Vagina (tissue), 2 donors: ENCODE measurements at regions of chr11 and their contacts with region 1.

Region 1: DNA sequence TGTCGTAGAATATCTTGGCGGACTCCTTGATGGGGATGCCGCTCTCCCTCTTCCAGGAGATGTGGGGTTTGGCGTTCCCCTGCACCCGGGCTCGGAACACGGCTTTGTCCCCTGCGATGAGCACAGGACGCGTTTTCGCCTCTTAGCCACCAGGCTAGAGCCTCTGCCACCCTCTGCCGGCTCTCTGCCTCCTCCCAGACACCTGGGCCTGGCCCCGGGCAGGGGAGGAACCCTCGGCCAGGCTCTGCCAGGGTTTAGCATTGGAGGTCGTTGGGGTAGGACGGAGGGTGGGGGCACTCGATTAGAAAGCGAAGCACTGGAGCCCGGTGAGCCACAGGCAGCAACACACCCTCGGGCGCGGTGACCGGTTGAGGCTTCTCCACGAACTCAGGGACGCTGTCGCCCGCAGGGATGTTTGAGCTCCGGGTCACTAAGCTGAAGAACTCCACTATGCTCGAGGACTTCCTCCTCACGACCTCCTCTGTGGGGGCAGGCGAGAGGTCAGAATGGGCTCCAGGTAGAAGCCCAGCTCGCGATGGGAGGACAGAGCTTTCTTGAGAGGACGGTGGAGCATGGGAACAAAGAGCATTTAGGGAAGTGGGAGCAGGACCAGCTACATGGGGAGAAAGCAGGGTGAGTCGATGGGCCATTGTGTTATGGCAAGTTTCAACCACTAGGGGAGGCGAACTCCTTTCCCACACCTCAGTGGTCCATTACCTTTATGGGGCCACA is 4.3 kb downstream of the IGSF22 start:
- DNase-seq: no peak
- H3K4me3 ChIP-seq: peak overlapping the region; percentile 59 to 81
- H3K27ac ChIP-seq: peak overlapping the region; percentile 79
- H3K4me1 ChIP-seq: peaks cover 19% of the 10 kb centered on the region
- H3K27me3 ChIP-seq: no peaks in the 10 kb centered on the region
- CTCF ChIP-seq: peak in 2 of 3 experiments; percentile 46 to 64
- POLR2A ChIP-seq: no peak

Region 2: GRCh38 chr11:18588297-18589252 is 133.2 kb before region 1 on chr11 and contains the start of gene UEVLD:
- intact Hi-C with region 1: loop called (anchors 5 kb)
- DNase-seq: peak in 1 of 2 donors; percentile 93
- H3K4me3 ChIP-seq: peak within 1 kb of the TSS; percentile 80 to 90
- H3K27ac ChIP-seq: peak within 1 kb of the TSS; percentile 70
- H3K4me1 ChIP-seq: peaks cover 35% of the 10 kb centered on the region
- H3K27me3 ChIP-seq: no peaks in the 10 kb centered on the region
- CTCF ChIP-seq: no peak
- POLR2A ChIP-seq: peak in 1 of 2 donors; percentile 31
- total RNA-seq, gene UEVLD: 21.4 TPM

Region 3: DNA sequence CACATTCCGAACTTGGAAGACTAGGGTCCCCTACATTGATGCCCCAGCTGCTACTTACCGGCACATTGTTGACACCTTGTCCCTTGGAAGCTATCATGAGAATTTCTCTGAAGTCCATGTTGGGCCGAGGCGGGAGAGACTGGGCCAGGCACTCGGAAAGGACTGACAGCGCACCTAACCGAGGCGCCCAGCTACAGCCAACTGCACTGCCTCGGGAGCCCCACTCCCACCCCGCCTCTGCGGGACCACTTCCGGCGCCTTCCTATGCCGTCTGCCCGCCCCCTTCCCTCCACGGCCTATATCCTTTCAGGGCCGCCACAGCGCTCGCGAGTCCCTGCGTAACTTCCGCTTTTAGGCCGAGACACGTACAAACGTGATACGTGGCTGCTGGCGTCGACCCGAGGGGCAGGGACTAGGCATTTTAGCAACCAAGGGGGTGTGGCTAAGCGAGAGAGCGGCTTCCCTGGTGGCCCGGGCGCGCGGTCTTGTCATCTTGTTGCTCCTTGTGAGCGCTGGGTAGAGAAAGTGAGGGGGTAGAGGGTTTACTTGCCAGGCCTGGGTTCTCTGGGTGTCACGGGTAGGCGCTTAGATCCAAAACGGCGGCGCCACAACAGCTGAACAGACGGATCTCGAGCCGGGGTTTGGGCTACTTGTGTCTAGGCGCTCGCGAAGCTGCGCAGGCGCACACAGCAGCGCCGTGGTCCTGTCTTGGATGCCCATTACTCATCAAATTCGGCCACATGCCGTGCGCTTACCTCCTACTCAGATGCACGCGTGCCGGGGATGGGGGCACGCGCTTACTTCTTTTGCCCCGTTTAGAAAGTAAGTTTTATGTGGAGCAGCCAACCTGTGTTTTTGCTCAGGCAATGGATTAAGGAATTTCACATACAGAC is 87.3 kb before region 1 on chr11 and contains the start of gene SPTY2D1:
- intact Hi-C with region 1: loop called (anchors 10 kb)
- DNase-seq: peak; percentile 98 to 99
- H3K4me3 ChIP-seq: peak within 1 kb of the TSS; percentile 61 to 69
- H3K27ac ChIP-seq: peak within 1 kb of the TSS; percentile 82
- H3K4me1 ChIP-seq: peaks cover 19% of the 10 kb centered on the region
- H3K27me3 ChIP-seq: no peaks in the 10 kb centered on the region
- CTCF ChIP-seq: peak in 1 of 3 experiments; percentile 6
- POLR2A ChIP-seq: peak in 1 of 2 donors; percentile 66
- total RNA-seq, gene SPTY2D1: 23.8 TPM

Region 4: GRCh38 chr11:18785411-18785810 is 63.7 kb after region 1 on chr11:
- intact Hi-C with region 1: no loop called
- DNase-seq: no peak
- H3K4me3 ChIP-seq: no peak overlapping the region
- H3K27ac ChIP-seq: no peak overlapping the region
- H3K4me1 ChIP-seq: peaks cover 3% of the 10 kb centered on the region
- H3K27me3 ChIP-seq: no peaks in the 10 kb centered on the region
- CTCF ChIP-seq: no peak
- POLR2A ChIP-seq: no peak

Region 5: GRCh38 chr11:18865951-18866350 is 144.2 kb after region 1 on chr11:
- intact Hi-C with region 1: no loop called
- DNase-seq: no peak
- H3K4me3 ChIP-seq: no peak overlapping the region
- H3K27ac ChIP-seq: no peak overlapping the region
- H3K4me1 ChIP-seq: no peaks in the 10 kb centered on the region
- H3K27me3 ChIP-seq: no peaks in the 10 kb centered on the region
- CTCF ChIP-seq: no peak
- POLR2A ChIP-seq: no peak